ENCODE measurements at regions of chr15 and their contacts with region 1.

Region 1: DNA sequence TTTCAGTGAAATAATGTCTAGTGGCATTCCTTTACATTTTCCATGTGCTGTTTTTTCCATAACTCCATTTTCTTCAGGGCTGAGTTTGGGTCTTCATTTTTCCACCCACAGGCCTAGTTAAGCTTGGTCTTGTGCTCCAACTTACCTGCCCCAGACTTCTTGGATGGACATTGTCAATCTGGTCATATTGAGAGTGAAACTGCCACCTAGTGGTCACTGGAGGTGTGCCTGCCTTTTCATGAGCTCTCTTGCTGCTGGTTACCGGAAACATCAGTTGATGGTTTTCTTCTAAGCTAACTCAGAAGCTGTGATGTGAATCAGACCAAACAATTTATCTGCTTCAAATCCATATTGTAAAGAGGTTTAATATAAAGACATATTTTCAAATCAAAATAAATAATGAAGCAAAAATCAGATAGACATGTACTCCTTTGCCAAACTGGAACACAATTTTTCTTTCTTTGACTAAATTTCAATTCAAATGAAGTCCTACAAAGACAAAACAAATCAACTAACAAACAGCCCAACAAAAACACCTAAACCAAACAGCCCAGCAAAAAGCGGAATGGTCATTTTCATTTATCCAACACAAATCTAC is 135.1 kb upstream of the RASGRP1 start:
- DNase-seq: peak; percentile 74 to 85 (median 85)
- H3K4me3 ChIP-seq: no peak overlapping the region
- H3K27ac ChIP-seq: no peak overlapping the region
- H3K4me1 ChIP-seq: peaks cover 2 to 49% (median 47%) of the 10 kb centered on the region in 4 experiments
- H3K27me3 ChIP-seq: no peaks in the 10 kb centered on the region

Region 2: GRCh38 chr15:38474155-38474757 is 225.5 kb before region 1 on chr15:
- CTCF ChIA-PET with region 1: interaction called, 44 read pairs
- POLR2A ChIA-PET with region 1: no interaction called
- DNase-seq: peak; percentile 67 to 83 (median 82)
- H3K4me3 ChIP-seq: no peak overlapping the region
- H3K27ac ChIP-seq: no peak overlapping the region
- H3K4me1 ChIP-seq: no peaks in the 10 kb centered on the region
- H3K27me3 ChIP-seq: no peaks in the 10 kb centered on the region

Region 3: GRCh38 chr15:38642689-38643270 is 57.0 kb before region 1 on chr15:
- CTCF ChIA-PET with region 1: no interaction called
- POLR2A ChIA-PET with region 1: no interaction called
- DNase-seq: no peak
- H3K4me3 ChIP-seq: no peak overlapping the region
- H3K27ac ChIP-seq: no peak overlapping the region
- H3K4me1 ChIP-seq: peaks cover 9 to 14% (median 13%) of the 10 kb centered on the region in 4 experiments
- H3K27me3 ChIP-seq: no peaks in the 10 kb centered on the region

Region 4: DNA sequence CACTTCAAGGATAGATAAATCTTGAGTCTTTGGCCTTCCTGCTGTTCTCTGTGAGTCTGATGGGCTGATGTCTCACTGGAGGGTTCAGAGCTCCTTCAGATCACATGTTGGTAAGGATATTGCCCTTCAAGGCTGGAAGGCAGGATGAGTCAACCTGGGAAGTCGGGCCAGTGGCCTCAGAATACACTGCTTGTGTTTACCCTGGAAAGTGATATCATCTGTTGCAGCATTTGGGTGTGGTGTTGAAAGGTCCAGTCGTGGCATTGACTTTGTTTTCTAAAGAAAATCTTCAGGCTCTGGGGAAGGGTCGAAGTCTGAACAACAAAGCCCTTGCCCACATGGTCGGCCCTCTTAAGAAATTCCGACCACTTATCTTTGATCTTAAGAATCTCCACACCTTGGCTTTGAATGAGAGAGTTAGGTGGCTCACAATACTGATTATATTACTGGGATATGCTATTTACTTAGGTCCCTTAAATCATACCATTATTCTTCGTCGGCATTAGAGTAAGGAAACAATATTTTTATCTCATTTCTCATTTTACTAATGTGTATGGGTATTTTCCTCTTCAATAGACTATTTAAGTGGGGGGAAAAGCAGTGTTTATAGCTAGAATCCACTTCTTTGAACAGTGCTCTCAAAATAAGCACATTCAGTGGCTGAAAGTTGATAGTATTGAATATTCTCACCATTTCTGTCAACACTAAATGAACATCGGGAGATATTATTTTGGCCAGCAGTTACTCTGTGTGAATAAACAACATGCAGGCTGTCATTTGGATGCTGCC is 168.8 kb after region 1 on chr15:
- CTCF ChIA-PET with region 1: no interaction called
- POLR2A ChIA-PET with region 1: no interaction called
- DNase-seq: no peak
- H3K4me3 ChIP-seq: no peak overlapping the region
- H3K27ac ChIP-seq: no peak overlapping the region
- H3K4me1 ChIP-seq: no peaks in the 10 kb centered on the region
- H3K27me3 ChIP-seq: no peaks in the 10 kb centered on the region

Measured in common myeloid progenitor, CD34-positive (primary cell).